ENCODE measurements at regions of chr4 and their contacts with region 1.

Region 1: DNA sequence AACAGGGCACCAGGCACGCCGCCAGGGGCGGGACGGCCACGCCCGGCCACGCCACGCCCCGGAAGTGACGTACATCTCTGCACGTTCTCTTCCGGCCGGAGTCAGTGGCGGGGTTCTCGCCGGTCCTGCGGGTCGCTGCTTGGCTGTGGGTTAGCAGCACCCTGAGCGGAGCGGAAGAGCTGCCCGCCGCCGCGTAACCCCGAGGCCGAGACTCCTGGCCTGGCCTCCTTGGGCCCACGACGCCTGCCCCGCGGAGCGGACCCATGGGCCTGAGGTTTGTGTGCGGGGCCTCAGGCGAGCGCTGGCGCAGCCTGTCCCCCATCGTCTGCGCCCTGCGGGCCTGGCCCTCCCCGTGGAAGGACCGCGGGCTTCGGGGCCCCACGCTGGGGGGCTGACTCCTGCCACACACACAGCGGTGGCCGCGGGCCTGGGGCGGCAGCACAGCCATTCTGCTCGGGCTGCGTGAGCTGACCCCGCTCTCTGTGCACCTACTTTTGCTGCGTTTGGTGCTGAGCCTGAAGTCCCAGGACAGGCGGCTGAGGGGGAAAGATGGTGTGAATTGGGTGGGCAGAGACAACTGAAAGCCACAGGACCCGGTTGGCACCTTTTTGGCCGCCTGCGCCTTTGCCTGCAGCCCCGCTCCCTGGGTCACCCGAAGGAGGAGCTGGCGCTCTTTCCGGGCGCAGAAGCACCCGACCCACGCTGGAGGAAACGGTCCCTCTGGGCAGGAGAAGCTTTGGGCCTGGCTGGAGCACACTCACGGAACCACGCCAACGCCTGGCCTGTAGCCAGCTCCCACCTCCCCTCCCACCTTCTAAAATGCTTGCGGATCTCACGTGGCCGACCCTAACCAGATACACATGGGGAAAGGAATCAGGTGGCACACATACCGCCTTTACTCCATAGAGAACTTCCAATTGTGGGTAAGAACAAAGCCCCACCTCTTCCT is 28.1 kb downstream of the NOP14 start:
- DNase-seq: peak; percentile 96
- H3K4me3 Mint-ChIP-seq: peak overlapping the region; percentile 88
- H3K27ac Mint-ChIP-seq: peak overlapping the region; percentile 98
- H3K4me1 Mint-ChIP-seq: peaks cover 63% of the 10 kb centered on the region
- H3K27me3 Mint-ChIP-seq: no peaks in the 10 kb centered on the region

Region 2: DNA sequence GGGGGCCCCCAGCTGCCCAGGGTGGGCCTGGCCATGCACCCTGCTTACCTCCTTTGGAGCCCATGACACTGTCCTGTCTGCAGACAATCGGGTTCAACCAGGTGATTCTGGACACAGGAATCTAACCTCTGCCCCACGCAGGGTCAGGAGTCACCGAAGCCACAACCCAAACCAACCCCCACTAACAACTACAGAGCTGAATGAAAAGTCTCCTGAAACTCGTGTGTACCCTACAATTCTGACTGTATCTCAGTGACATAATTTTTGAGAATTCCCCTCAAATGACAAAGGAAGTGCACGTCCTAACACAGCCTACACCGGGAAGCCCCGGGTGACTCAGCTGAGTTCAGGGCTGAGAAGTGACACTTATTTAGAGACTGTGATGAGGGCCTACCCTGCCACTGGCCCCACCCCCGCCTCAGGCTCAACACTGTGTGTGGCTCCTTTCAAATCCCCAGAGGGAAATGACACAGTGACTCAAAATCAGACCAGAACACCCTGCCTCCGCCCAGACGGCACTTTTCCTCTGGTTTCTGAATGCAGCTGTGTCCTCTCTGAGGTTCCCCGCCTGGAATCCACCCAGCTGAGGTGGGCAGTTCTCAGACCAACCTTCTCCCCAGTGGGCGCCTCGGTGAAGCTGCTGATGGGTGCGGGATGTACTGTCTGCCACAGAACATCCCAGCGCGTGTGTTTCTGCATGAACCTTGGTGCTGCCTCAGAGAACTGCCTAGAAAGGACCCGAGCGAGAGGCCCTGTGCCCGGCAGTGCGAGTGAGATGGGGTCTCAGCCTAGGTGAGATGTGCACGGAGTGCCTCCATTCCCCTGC is 188.9 kb before region 1 on chr4:
- CTCF ChIA-PET with region 1: no interaction called
- POLR2A ChIA-PET with region 1: interaction called, 25 read pairs
- DNase-seq: peak; percentile 92
- H3K4me3 Mint-ChIP-seq: peak overlapping the region; percentile 68
- H3K27ac Mint-ChIP-seq: peak overlapping the region; percentile 96
- H3K4me1 Mint-ChIP-seq: peaks cover 54% of the 10 kb centered on the region
- H3K27me3 Mint-ChIP-seq: no peaks in the 10 kb centered on the region

Region 3: GRCh38 chr4:2761035-2761923 is 173.8 kb before region 1 on chr4:
- CTCF ChIA-PET with region 1: interaction called, 8 read pairs
- POLR2A ChIA-PET with region 1: interaction called, 30 read pairs
- DNase-seq: peak; percentile 46
- H3K4me3 Mint-ChIP-seq: no peak overlapping the region
- H3K27ac Mint-ChIP-seq: no peak overlapping the region
- H3K4me1 Mint-ChIP-seq: peaks cover 25% of the 10 kb centered on the region
- H3K27me3 Mint-ChIP-seq: no peaks in the 10 kb centered on the region

Region 4: GRCh38 chr4:2811830-2812611 is 123.1 kb before region 1 on chr4:
- CTCF ChIA-PET with region 1: no interaction called
- POLR2A ChIA-PET with region 1: interaction called, 25 read pairs
- DNase-seq: peak; percentile 81
- H3K4me3 Mint-ChIP-seq: peak overlapping the region; percentile 82
- H3K27ac Mint-ChIP-seq: peak overlapping the region; percentile 99
- H3K4me1 Mint-ChIP-seq: peaks cover 62% of the 10 kb centered on the region
- H3K27me3 Mint-ChIP-seq: no peaks in the 10 kb centered on the region

Region 5: DNA sequence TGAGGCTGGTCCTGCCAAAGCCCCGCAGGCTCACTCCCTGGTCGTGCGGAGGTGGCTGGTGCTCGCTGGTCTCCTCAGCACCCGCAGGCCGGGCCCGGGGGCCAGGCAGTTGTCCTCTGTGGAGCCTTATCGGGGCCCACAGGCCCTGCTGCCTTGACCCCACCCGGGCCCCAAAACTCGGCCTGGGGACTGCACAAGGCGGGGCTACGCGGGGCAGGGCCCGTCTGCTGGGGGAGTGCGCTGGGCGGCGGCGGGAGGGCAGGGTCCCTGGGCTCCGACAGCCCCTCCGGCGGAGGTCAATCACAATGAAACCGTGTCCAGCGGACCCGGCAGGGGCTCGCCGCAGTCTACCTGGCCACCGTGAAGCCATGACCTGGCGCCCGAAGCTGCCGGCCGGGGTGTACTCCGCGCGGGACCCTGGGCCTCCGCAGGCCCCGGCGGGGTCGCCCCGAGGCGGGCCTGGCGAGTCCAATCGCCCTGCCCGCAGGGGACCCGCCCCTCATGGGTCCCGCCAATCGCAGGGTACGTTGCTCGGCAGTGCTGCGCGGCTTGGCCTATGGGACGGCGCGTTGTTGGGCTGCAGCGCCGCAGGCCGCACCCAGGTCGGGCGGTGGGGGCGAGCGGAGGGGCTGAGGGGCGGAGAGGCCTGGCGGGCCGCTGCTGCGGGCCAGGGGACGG is 91.7 kb before region 1 on chr4 and contains the start of gene ADD1:
- CTCF ChIA-PET with region 1: no interaction called
- POLR2A ChIA-PET with region 1: interaction called, 35 read pairs
- DNase-seq: peak; percentile 94
- H3K4me3 Mint-ChIP-seq: peak within 1 kb of the TSS; percentile 84
- H3K27ac Mint-ChIP-seq: peak within 1 kb of the TSS; percentile 85
- H3K4me1 Mint-ChIP-seq: peaks cover 59% of the 10 kb centered on the region
- H3K27me3 Mint-ChIP-seq: no peaks in the 10 kb centered on the region
- total RNA-seq, gene ADD1: 266 to 277 TPM

Region 6: GRCh38 chr4:2948895-2949765 is 14.0 kb after region 1 on chr4:
- CTCF ChIA-PET with region 1: interaction called, 64 read pairs
- POLR2A ChIA-PET with region 1: interaction called, 95 read pairs
- DNase-seq: no peak
- H3K4me3 Mint-ChIP-seq: no peak overlapping the region
- H3K27ac Mint-ChIP-seq: no peak overlapping the region
- H3K4me1 Mint-ChIP-seq: peaks cover 12% of the 10 kb centered on the region
- H3K27me3 Mint-ChIP-seq: no peaks in the 10 kb centered on the region

Region 7: GRCh38 chr4:2963175-2963965 is 28.3 kb after region 1 on chr4 and contains the starts of genes GRK4 and NOP14:
- CTCF ChIA-PET with region 1: interaction called, 13 read pairs
- POLR2A ChIA-PET with region 1: interaction called, 74 read pairs
- DNase-seq: peak; percentile 98
- H3K4me3 Mint-ChIP-seq: peak within 1 kb of the TSS; percentile 73
- H3K27ac Mint-ChIP-seq: peak within 1 kb of the TSS; percentile 67
- H3K4me1 Mint-ChIP-seq: peaks cover 39% of the 10 kb centered on the region
- H3K27me3 Mint-ChIP-seq: peaks cover 4% of the 10 kb centered on the region
- total RNA-seq, gene GRK4: 3.1 to 3.6 TPM
- total RNA-seq, gene NOP14: 34.1 to 38.7 TPM

Measured in activated CD4-positive, alpha-beta memory T cell treated with anti-CD3 and anti-CD28 coated beads, Interleukin-2, amount 10 ng/mL, durations not matched to agents 7 days and 5 days (primary cell).